Tibial artery (tissue), 4 donors: ENCODE measurements at regions of chr4 and their contacts with region 1.

Region 1: DNA sequence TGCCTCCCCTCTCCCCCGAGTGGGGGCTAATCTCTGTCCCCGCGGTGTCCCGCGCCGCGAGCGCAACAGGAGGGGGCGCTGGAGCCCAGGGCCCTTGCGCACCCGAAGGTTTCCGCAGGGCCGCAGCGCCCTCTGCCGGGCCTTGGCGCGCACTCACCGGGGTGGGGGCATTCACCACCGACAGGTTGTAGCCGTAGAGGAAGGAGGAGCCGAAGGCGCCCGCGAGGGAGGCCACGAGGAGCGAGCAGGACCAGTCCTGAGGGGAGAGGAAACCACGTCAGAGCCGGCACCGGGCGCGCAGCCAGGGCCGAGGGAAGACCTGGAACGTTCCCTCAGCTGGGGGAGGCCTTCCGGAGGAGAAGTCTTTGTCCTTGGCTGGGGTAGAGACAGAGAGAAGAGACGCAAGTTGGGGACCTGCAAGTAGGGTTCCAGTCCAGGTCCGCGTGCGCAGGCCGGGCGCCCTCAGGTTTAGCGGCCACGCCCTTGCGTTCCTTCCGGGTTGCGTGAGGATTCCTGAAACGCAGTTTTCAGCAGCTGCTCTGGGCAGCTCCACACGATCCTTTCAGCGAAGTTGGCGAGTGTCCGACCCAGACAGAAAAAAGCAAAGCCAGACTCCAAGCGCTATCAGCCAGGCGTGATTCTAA is 2.4 kb downstream of the SLC2A9 start:
- DNase-seq: peak; percentile 95 to 99
- H3K4me3 ChIP-seq: peak overlapping the region; percentile 38 to 58
- H3K27ac ChIP-seq: peak overlapping the region; percentile 80 to 82
- H3K4me1 ChIP-seq: peaks cover 5 to 36% (median 25%) of the 10 kb centered on the region in 4 donors
- H3K27me3 ChIP-seq: no peaks in the 10 kb centered on the region
- CTCF ChIP-seq: peak; percentile 95 to 98

Region 2: DNA sequence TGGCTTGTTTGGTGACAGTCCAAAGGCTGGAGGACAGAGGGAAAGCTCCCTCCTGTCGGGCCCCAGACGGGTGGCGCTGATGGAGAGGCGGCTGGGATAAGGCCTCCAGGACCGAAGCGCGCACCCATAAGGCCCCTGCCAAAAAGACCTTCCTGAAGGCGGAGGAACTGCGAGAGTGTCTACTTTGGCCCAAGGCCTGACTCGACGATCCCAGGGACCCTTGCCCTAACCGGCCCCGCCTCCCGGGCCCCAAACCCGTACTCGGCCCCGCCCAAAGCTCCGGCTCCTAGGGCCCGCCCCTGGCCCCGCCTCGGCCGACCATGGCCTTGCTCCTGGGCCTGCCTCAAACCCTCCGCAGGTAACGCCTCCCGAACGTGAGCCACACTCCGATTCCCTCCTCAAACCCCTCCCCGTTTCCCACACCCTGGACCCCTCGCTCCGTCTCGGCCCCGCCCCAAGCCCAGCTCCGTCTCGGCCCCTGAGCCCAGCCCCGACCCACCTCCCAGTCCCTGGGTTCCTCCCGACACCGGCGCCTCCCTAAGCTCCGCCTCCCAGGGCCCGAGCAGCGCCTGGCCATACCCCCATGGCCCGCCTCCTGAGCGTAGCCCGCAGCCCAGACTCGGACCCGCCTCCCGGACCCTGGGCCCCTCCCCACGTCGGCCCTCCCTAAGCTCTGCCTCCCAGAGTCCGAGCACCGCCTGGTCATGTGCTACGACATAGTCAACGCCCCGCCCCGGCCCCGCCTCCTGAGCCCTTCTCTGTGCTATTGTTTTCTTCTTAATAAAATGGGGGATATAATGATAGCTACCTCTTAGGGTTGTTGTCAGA is 327.5 kb before region 1 on chr4:
- intact Hi-C with region 1: loop called (anchors 10 kb)
- DNase-seq: peak; percentile 96 to 99
- H3K4me3 ChIP-seq: peak overlapping the region; percentile 62 to 69
- H3K27ac ChIP-seq: peak overlapping the region; percentile 79 to 85
- H3K4me1 ChIP-seq: peaks cover 0 to 13% (median 3%) of the 10 kb centered on the region in 4 donors
- H3K27me3 ChIP-seq: no peaks in the 10 kb centered on the region
- CTCF ChIP-seq: no peak

Region 3: GRCh38 chr4:10063544-10064300 is 44.8 kb after region 1 on chr4:
- intact Hi-C with region 1: loop called (anchors 5 kb)
- DNase-seq: peak; percentile 85 to 93
- H3K4me3 ChIP-seq: no peak overlapping the region
- H3K27ac ChIP-seq: peak overlapping the region; percentile 23 to 70
- H3K4me1 ChIP-seq: peaks cover 0 to 13% (median 9%) of the 10 kb centered on the region in 4 donors
- H3K27me3 ChIP-seq: no peaks in the 10 kb centered on the region
- CTCF ChIP-seq: peak; percentile 69 to 78

Region 4: DNA sequence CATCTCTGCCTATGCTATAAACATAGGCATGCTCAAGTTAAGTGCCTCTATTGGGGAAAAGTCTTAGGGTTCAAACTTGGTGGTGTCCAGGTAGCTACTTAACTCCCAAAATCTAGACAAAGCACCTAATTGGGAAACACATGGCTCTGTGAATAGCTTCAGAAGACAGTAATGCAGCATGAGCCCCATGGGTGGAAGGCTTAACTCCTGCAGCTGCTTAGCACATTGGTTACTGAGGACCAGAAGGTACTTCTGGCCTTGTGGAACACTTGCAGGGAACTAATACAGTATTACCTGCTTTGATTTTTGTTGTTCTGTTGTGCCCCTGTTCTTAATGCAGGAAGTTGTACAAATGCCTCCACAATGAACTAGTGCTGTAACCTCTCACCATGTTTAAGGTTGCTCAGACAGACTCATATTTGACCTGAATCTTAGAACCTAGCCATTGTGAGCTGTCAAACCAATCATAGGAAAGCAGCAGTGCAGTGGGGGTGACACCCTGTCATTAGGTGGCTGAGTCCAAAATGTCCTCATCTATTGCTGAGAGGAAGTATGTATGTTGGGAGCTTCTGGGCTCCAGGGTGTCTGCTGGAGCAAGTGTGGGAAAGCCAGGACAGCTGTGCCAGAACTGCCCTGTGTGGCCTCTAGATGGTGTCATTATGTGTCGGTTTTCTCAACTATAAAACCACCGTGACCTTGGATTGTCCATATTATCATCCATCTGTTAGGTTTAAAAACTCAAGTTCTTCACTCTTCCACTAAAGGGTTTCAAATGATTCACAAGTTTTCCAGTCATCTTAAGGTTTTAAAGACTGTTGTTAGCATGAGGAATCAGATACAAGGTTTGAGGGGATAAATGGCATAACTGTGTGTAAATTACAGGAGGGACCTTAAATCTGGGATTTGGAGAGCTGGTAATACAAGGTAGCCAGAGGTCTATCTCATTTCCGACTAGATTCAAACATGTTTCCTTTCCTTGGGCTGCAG is 167.6 kb after region 1 on chr4:
- intact Hi-C with region 1: no loop called
- DNase-seq: no peak
- H3K4me3 ChIP-seq: no peak overlapping the region
- H3K27ac ChIP-seq: no peak overlapping the region
- H3K4me1 ChIP-seq: no peaks in the 10 kb centered on the region
- H3K27me3 ChIP-seq: no peaks in the 10 kb centered on the region
- CTCF ChIP-seq: no peak